ENCODE measurements at regions of chr22 and their contacts with region 1.

Region 1: DNA sequence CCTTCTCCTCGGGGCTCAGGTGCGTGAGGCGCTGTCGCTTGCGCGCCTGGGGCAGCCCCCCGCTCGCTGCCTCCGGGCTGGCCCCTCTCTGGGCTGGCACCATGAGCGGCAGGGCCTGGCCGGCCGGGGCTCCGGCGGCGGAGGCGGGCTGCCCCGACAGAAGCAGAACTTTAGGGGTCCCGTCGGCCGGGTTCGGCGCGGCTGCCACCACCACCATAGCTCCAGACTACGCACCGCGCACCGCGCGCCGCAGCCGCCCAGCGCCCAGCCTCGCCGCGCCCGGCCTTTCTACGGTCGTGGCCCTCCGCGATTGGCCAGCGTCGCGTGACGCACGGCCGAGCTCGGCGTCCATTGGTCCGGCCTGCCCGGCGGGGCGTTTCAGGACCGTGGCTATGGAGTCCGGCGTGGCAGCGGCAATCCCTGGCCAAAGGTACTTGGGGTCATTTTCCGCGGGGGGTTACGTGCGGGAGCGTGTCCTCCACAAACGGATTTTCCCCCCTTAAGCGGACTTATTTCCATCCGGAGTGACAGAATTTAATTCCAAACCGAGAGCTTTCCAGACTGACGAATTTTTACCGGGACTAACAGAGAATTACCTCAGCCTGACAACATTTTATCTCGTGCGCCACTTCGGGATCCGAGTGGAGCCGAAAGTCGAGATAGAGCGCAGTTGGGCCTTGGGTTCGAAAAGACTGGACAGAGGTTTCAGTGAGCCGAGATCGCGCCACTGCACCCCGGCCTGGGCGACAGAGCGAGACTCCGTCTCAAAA is at the start of gene XBP1:
- DNase-seq: peak; percentile 94
- H3K4me3 Mint-ChIP-seq: peak within 1 kb of the TSS; percentile 87
- H3K27ac Mint-ChIP-seq: peak within 1 kb of the TSS; percentile 97
- H3K4me1 Mint-ChIP-seq: peaks cover 13% of the 10 kb centered on the region
- H3K27me3 Mint-ChIP-seq: no peaks in the 10 kb centered on the region
- CTCF ChIP-seq: no peak
- total RNA-seq, gene XBP1: 274 and 429 TPM in 2 replicates

Region 2: DNA sequence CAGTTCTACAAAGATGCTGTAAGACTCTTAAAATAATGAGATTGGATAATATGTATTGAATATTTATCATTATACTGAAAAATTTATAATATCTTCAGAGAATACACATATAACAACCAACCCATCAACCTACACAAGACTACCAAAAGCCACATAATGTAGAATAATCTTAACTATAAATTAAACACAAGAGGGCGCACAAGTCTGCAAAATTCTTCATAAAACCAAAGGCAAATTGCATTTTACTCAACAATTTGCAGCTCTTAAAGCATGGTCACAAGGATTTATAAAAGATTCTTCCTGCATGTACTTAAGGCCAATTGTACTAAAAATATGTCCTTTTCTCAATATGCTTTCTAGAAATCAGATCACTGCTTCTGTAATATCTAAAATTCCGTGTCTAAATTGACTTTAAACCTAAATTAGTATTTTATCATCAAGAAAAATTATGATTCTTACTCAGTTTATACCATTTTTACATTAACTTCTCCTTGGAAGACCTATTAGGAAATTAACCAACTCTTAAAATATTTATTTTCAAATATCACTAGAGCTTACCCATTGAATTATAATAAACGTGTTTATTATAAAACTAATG is 199.8 kb before region 1 on chr22:
- CTCF ChIA-PET with region 1: interaction called, 10 read pairs
- POLR2A ChIA-PET with region 1: interaction called, 5 read pairs
- intact Hi-C with region 1: no loop called
- DNase-seq: peak; percentile 56
- H3K4me3 Mint-ChIP-seq: no peak overlapping the region
- H3K27ac Mint-ChIP-seq: no peak overlapping the region
- H3K4me1 Mint-ChIP-seq: no peaks in the 10 kb centered on the region
- H3K27me3 Mint-ChIP-seq: peaks cover 21% of the 10 kb centered on the region
- CTCF ChIP-seq: peak; percentile 41

Region 3: DNA sequence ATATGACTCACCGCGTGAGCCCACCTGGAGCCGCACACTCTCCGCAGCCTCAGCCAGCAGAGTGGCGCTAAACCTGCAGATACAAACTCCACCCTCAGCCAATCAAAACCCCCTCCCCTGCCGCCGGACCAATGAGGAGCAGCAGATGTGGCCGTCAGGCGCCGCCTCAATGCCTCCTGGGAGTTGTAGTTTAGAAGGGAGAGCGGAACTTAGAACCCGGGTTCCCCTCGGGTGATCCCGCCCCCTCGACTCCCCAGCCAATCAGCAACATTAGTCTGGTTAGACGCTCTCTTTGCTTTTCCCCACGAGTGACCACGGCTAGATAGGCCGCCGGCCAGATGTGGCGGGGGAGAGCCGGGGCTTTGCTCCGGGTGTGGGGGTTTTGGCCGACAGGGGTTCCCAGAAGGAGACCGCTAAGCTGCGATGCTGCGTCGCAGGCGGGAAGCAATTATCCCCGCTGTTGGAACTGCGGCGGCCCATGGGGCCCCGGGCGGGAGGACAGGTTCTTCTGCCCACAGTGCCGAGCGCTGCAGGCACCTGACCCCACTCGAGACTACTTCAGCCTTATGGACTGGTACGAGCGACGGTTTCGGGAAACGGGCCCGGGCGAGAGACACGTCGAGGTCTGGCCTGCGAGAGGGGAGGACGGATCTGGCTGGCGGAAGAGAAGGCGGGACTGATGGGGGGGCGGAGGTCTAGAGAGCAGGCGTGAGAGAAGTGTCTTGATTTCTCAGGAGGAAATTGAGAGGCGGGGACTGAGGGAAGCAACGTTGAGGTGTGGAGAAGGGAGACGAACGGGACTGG is 58.5 kb before region 1 on chr22 and contains the starts of genes CHEK2 and HSCB:
- CTCF ChIA-PET with region 1: interaction called, 5 read pairs
- POLR2A ChIA-PET with region 1: interaction called, 47 read pairs
- intact Hi-C with region 1: loop called (anchors 2 kb)
- DNase-seq: peak; percentile 99
- H3K4me3 Mint-ChIP-seq: peak within 1 kb of the TSS; percentile 93
- H3K27ac Mint-ChIP-seq: peak within 1 kb of the TSS; percentile 92
- H3K4me1 Mint-ChIP-seq: peaks cover 15% of the 10 kb centered on the region
- H3K27me3 Mint-ChIP-seq: no peaks in the 10 kb centered on the region
- CTCF ChIP-seq: no peak
- total RNA-seq, gene CHEK2: 17.6 and 18.8 TPM in 2 replicates
- total RNA-seq, gene HSCB: 19.3 and 24.7 TPM in 2 replicates

Region 4: GRCh38 chr22:28783786-28784671 is 16.5 kb before region 1 on chr22:
- CTCF ChIA-PET with region 1: interaction called, 4 read pairs
- POLR2A ChIA-PET with region 1: interaction called, 61 read pairs
- intact Hi-C with region 1: no loop called
- DNase-seq: no peak
- H3K4me3 Mint-ChIP-seq: no peak overlapping the region
- H3K27ac Mint-ChIP-seq: no peak overlapping the region
- H3K4me1 Mint-ChIP-seq: no peaks in the 10 kb centered on the region
- H3K27me3 Mint-ChIP-seq: no peaks in the 10 kb centered on the region
- CTCF ChIP-seq: no peak

Region 5: GRCh38 chr22:28817919-28818909 is 17.7 kb after region 1 on chr22:
- CTCF ChIA-PET with region 1: no interaction called
- POLR2A ChIA-PET with region 1: interaction called, 10 read pairs
- intact Hi-C with region 1: no loop called
- DNase-seq: no peak
- H3K4me3 Mint-ChIP-seq: no peak overlapping the region
- H3K27ac Mint-ChIP-seq: no peak overlapping the region
- H3K4me1 Mint-ChIP-seq: no peaks in the 10 kb centered on the region
- H3K27me3 Mint-ChIP-seq: no peaks in the 10 kb centered on the region
- CTCF ChIP-seq: no peak

Region 6: GRCh38 chr22:29004647-29005371 is 204.3 kb after region 1 on chr22:
- CTCF ChIA-PET with region 1: no interaction called
- POLR2A ChIA-PET with region 1: no interaction called
- intact Hi-C with region 1: no loop called
- DNase-seq: no peak
- H3K4me3 Mint-ChIP-seq: no peak overlapping the region
- H3K27ac Mint-ChIP-seq: no peak overlapping the region
- H3K4me1 Mint-ChIP-seq: no peaks in the 10 kb centered on the region
- H3K27me3 Mint-ChIP-seq: no peaks in the 10 kb centered on the region
- CTCF ChIP-seq: no peak